ENCODE measurements at regions of chrX and their contacts with region 1.

Region 1: GRCh38 chrX:103817502-103817901 is 14.6 kb downstream of the RAB9B start:
- DNase-seq: no peak
- ATAC-seq: peak; percentile 49

Region 2: DNA sequence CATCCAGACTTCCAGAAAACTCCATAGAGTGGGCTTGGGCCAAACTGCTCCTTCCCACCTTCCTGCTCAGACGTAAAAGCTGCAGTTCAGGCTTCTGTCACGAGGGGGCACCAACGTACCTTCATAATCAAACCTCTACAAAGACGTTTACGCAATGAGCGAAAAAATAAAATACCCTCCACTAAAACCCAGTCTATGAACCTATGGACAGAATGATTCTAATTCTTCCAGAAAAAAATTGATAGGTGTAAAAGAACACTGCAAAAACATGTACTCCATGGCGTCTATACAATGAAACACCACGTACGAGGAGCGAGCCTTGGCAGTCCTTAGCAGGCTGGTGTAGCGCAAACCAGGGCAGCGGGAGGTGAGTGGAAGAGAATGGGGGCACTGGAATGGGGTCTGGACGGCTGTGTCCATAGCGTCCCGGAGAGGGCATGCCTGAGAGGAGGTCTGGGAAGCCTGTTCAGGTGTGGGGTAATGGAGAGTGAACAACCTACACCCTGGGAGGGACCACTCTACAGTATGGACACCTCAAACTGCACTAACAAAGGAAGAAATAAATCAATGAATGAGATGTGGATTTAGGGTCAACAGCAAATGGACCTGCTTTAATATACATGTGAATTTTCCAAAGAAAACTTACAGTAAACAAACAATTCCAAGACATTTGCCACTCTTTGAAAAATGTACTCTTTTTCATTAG is 283.8 kb before region 1 on chrX:
- intact Hi-C with region 1: loop called (anchors 10 kb)
- DNase-seq: peak; percentile 90
- ATAC-seq: peak; percentile 78

Region 3: DNA sequence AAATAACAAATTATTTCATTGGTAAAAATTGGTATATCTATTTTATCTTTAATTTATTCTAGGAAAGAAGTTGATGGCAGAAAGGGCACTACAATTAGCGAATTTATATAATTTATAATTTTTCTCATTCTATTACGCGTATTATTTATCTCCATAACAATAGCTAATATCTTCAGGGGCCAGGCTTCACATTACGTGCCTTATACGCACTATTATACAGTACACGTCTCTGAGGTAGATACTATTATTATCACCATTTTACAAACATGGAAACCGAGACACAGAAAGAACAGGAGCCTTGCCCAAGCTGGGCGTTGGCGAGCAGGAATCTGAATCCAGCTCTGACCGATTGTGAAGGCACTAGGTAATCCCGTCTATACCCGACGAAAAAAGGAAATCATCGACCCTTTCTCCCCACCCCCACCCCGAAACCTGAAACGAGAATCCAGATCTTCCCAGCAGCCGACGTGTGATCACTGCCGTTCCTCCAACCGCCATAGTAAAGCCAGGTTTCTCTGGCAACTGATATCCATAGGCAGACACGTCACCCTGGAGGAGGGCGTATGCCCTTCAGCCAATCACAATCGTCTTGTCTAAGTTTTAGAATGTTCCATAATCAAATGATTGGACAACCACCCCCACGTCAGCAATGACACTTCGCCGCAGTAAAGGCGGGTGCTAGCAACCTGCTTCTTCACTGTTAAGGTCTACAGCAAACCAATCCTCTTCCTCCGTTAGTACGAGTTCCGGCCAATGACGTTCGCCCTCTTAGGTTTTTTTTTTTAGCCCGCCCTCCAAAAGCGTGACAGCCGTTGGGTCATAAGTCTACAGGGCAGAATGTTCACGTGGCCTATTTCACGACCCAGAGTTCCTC is 131.1 kb before region 1 on chrX and contains the start of gene MORF4L2:
- intact Hi-C with region 1: loop called (anchors 10 kb)
- DNase-seq: peak; percentile 91
- ATAC-seq: peak; percentile 94
- total RNA-seq, gene MORF4L2: 224 TPM

Region 4: DNA sequence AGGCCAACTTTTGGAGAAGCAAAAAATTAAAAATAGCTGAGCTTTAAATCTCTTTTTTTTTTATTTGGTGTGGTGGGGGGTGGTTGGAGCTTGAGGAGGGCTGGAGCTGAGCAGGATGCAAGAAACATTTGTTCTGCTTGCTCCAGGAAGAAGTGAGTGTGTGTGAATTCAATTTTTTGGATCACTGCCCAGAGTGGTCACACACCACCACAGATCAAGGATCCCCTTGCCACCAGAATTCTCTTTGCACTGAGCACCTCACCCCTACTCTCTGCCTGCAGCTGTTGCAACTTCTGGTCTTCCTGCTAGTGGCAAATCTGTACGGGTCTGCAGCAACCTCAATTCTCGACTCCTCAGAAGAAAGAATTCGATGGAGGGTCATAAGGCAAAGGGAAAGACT is 60.8 kb before region 1 on chrX:
- intact Hi-C with region 1: no loop called
- DNase-seq: no peak
- ATAC-seq: no peak